CD4-positive, alpha-beta memory T cell (primary cell): ENCODE measurements at regions of chr1 and their contacts with region 1.

Region 1: DNA sequence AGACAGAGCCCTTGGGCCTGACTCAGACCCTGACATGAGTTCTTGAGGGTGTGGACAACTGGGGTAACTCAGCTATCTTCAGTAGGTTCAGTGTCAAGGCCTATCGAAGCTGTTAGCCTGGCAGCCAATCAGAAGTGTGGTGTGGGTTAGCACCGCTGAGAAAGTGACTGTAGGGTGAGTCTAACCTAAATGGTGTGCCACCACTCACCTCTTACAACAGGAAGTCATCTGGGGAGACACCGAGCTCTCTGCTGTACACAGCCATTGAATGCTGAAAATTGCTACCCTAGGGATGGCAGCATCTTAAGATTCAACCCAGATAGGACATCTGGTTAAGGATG is 44.6 kb downstream of the RASSF5 start:
- DNase-seq: peak; percentile 80 to 95 (median 84)
- H3K4me3 ChIP-seq: no peak overlapping the region
- H3K4me3 Mint-ChIP-seq: peak overlapping the region; percentile 49 to 88 (median 72)
- H3K27ac ChIP-seq: peak overlapping the region; percentile 54
- H3K27ac Mint-ChIP-seq: peak overlapping the region; percentile 90 to 99 (median 96)
- H3K4me1 ChIP-seq: peaks cover 59% of the 10 kb centered on the region
- H3K4me1 Mint-ChIP-seq: peaks cover 34 to 65% (median 48%) of the 10 kb centered on the region in 4 donors
- H3K27me3 ChIP-seq: no peaks in the 10 kb centered on the region
- H3K27me3 Mint-ChIP-seq: no peaks in the 10 kb centered on the region

Region 2: DNA sequence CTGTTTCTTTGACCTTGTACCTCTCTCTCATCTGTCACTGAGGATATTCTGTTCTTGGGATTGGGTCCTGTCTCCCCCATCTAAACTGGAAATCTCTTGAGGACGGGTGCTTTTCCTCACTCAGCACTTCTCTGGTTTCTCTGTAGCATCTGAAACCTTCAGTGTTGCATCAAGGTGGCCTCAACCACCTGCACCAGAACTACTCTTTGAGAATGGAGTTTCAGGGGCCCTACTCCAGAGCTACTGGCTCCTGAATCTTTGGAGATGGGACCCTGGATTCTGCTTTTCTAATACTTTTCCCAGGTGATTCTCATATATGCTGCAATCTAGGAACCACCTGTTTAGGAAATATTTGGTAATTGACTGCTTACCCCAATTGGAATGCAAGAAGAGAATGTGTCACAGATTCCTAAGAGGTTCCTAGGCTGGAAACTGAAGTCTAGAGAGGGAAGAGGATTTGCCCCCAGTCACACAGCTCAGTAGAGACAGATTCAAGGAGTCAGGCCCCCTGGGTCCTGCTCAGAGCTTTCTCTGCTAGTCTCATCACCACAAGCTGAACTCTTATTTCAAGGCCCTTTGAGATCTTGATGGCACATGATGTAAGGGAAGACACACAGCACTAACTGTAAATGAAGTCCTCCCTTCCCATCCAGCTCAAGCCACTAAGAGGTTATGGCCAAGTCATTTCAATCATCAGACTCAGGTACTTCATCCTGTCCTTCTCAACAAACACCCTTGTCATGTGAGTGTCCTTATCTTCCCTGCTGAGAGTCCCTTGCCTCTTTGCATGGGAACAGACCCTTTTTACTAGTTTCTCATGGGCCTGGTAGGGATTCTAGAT is 11.6 kb after region 1 on chr1:
- CTCF ChIA-PET with region 1: interaction called, 207 read pairs
- POLR2A ChIA-PET with region 1: interaction called, 185 read pairs
- intact Hi-C with region 1: loop called (anchors 1 kb)
- DNase-seq: no peak
- H3K4me3 ChIP-seq: peak overlapping the region; percentile 24 to 46
- H3K4me3 Mint-ChIP-seq: peak overlapping the region; percentile 73 to 92 (median 84)
- H3K27ac ChIP-seq: peak overlapping the region; percentile 53
- H3K27ac Mint-ChIP-seq: peak overlapping the region; percentile 88 to 94 (median 94)
- H3K4me1 ChIP-seq: peaks cover 95% of the 10 kb centered on the region
- H3K4me1 Mint-ChIP-seq: peaks cover 73 to 99% (median 86%) of the 10 kb centered on the region in 4 donors
- H3K27me3 ChIP-seq: no peaks in the 10 kb centered on the region
- H3K27me3 Mint-ChIP-seq: no peaks in the 10 kb centered on the region